ENCODE measurements at regions of chr17 and their contacts with region 1.

Region 1: GRCh38 chr17:82236142-82236981 is 7.5 kb downstream of the SLC16A3 start:
- DNase-seq: peak; percentile 79
- H3K4me3 Mint-ChIP-seq: no peak overlapping the region
- H3K27ac Mint-ChIP-seq: no peak overlapping the region
- H3K4me1 Mint-ChIP-seq: peaks cover 50% of the 10 kb centered on the region
- H3K27me3 Mint-ChIP-seq: no peaks in the 10 kb centered on the region

Region 2: DNA sequence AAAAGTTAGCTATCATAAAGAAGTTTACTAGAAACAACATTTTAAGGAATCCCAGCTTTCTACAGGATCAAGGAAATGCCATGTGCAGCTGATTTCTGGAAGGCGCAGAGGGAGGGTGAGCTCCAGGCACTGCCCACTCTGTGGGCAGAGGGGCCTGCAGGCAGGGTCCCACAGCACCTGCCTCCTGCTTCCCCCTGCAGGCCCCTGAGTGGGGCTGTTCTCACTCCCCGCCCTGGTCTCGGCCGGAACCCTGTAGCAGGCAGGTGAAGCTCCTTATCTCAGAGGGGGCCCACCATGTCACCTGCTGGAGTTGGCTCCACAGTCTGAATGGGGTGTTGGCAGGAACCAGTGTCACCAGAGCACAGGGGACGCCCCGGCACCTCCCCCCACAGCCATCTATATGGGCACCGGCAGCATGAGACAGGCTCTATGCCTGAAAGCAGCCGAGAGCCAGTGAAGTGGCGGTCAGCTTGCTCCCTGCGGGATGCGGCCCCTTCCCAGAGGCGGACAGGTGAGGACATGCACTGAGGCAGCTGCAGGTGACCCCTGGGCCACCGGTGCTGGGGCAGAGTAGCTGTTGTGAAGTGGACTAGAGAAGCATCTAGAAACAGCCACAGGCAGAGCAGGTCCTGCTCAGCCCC is 90.7 kb before region 1 on chr17:
- CTCF ChIA-PET with region 1: no interaction called
- POLR2A ChIA-PET with region 1: no interaction called
- intact Hi-C with region 1: no loop called
- DNase-seq: no peak
- H3K4me3 Mint-ChIP-seq: no peak overlapping the region
- H3K27ac Mint-ChIP-seq: no peak overlapping the region
- H3K4me1 Mint-ChIP-seq: no peaks in the 10 kb centered on the region
- H3K27me3 Mint-ChIP-seq: no peaks in the 10 kb centered on the region

Region 3: GRCh38 chr17:82216301-82217119 is 19.9 kb before region 1 on chr17:
- CTCF ChIA-PET with region 1: interaction called, 10 read pairs
- POLR2A ChIA-PET with region 1: interaction called, 3 read pairs
- intact Hi-C with region 1: no loop called
- DNase-seq: peak; percentile 85
- H3K4me3 Mint-ChIP-seq: no peak overlapping the region
- H3K27ac Mint-ChIP-seq: peak overlapping the region; percentile 76
- H3K4me1 Mint-ChIP-seq: peaks cover 33% of the 10 kb centered on the region
- H3K27me3 Mint-ChIP-seq: no peaks in the 10 kb centered on the region

Region 4: GRCh38 chr17:82315703-82316358 is 79.5 kb after region 1 on chr17:
- CTCF ChIA-PET with region 1: interaction called, 23 read pairs
- POLR2A ChIA-PET with region 1: interaction called, 8 read pairs
- intact Hi-C with region 1: loop called (anchors 1 kb)
- DNase-seq: peak; percentile 64
- H3K4me3 Mint-ChIP-seq: no peak overlapping the region
- H3K27ac Mint-ChIP-seq: peak overlapping the region; percentile 92
- H3K4me1 Mint-ChIP-seq: peaks cover 19% of the 10 kb centered on the region
- H3K27me3 Mint-ChIP-seq: no peaks in the 10 kb centered on the region

Region 5: GRCh38 chr17:82320956-82321927 is 84.9 kb after region 1 on chr17:
- CTCF ChIA-PET with region 1: interaction called, 23 read pairs
- POLR2A ChIA-PET with region 1: interaction called, 8 read pairs
- intact Hi-C with region 1: loop called (anchors 1 kb)
- DNase-seq: peak; percentile 88
- H3K4me3 Mint-ChIP-seq: peak overlapping the region; percentile 80
- H3K27ac Mint-ChIP-seq: no peak overlapping the region
- H3K4me1 Mint-ChIP-seq: peaks cover 32% of the 10 kb centered on the region
- H3K27me3 Mint-ChIP-seq: no peaks in the 10 kb centered on the region

Region 6: DNA sequence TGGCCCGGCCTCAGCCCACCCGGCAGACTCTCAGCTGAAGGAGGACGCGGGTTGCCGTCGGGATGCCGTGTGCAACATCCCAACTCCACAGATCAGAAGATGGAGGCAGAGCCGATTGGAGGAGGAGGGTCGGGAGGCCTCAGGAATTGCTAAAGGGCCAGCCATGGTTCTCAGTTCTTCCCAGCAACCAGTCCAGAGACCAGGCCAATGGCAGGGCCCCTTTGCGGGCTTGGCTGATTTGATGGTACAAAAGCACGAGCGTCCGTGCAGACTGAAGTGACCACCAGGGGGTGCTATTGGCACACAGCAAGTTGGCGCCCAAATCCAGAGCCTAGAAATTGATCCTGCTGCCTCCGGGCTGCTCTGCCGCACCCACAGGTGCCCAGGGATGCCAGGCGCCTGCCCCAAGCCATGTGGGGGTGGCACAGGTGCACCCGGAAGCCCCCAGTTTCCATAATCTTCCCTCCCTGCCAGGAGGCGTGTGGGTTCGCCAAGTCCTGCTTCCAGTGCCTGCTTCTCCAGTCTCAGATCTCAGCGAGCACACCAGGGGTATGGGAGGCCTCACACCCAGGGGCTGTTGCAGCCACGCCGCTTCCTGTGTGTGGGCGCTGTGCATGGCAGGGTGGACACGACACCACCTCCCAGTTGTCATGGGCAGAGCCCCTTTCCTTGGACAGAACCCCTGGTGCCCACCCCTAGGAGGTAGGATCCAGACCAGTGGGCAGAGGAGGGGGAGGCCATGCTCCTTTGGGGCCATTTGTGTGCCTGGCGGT is 115.5 kb after region 1 on chr17:
- CTCF ChIA-PET with region 1: interaction called, 19 read pairs
- POLR2A ChIA-PET with region 1: no interaction called
- intact Hi-C with region 1: no loop called
- DNase-seq: peak; percentile 88
- H3K4me3 Mint-ChIP-seq: no peak overlapping the region
- H3K27ac Mint-ChIP-seq: no peak overlapping the region
- H3K4me1 Mint-ChIP-seq: peaks cover 4% of the 10 kb centered on the region
- H3K27me3 Mint-ChIP-seq: peaks cover 4% of the 10 kb centered on the region

Region 7: DNA sequence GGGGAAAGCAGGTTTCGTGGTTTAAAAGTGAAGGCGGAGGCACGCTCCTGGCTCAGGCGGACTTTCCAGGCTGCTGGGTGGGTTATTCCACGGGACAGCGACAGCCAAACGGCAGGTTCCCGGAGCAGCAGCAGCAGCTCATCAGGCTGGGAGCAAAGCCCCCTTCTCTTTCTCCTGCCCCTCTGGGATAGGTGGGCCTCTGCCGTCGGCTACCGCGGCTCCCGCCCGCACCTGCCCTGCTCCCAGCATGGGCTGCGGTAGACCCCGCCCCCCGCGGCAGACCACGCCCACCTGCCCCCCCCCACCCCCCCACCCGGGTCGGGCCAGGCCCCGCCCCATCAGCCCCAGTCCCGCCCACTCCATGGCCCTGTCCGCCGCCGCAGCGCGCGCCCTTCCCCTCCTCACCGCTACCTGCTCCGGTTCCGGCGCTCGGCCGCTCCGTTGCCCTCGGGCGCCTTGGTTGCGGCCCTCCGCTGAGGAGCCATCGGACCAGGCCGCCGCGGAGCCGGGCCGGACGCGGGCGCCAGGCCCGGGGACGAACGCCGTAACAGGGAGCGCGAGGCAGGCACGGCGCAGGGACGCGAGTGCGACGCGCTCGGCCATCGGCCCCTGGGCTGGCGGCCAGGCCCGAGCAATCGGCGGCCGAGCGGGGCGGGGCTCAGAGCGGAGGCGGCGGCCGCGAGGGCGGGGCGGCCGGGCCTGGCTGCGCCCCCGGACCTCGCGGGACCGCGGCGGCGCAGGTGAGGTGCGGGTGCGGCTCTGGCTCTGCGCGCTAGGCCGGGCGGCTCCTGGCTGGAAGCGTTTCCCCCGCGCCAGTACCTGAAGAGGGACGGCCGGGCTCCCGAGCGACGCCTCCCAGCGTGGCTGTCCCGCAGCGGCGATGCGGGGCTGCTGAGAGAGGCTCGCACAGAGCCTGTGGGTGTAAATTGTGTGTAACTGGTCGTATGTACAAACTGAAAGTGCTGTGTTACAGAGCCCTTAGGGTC is 181.9 kb after region 1 on chr17 and contains the starts of genes HEXD and OGFOD3:
- CTCF ChIA-PET with region 1: interaction called, 6 read pairs
- POLR2A ChIA-PET with region 1: no interaction called
- intact Hi-C with region 1: loop called (anchors 2 kb)
- DNase-seq: peak; percentile 87
- H3K4me3 Mint-ChIP-seq: peak within 1 kb of the TSS; percentile 79
- H3K27ac Mint-ChIP-seq: peak within 1 kb of the TSS; percentile 78
- H3K4me1 Mint-ChIP-seq: peaks cover 29% of the 10 kb centered on the region
- H3K27me3 Mint-ChIP-seq: no peaks in the 10 kb centered on the region
- total RNA-seq, gene HEXD: 21.7 to 26.0 TPM
- total RNA-seq, gene OGFOD3: 29.7 to 32.2 TPM

Region 8: GRCh38 chr17:82716203-82717010 is 480.0 kb after region 1 on chr17 and contains the start of gene FN3KRP:
- CTCF ChIA-PET with region 1: no interaction called
- POLR2A ChIA-PET with region 1: no interaction called
- intact Hi-C with region 1: no loop called
- DNase-seq: peak; percentile 93
- H3K4me3 Mint-ChIP-seq: peak within 1 kb of the TSS; percentile 90
- H3K27ac Mint-ChIP-seq: peak within 1 kb of the TSS; percentile 82
- H3K4me1 Mint-ChIP-seq: peaks cover 19% of the 10 kb centered on the region
- H3K27me3 Mint-ChIP-seq: no peaks in the 10 kb centered on the region
- total RNA-seq, gene FN3KRP: 36.7 to 40.5 TPM

Measured in activated CD4-positive, alpha-beta memory T cell treated with anti-CD3 and anti-CD28 coated beads for 36 hours (primary cell).